Transverse colon (tissue), 4 donors: ENCODE measurements at regions of chr1 and their contacts with region 1.

Region 1: DNA sequence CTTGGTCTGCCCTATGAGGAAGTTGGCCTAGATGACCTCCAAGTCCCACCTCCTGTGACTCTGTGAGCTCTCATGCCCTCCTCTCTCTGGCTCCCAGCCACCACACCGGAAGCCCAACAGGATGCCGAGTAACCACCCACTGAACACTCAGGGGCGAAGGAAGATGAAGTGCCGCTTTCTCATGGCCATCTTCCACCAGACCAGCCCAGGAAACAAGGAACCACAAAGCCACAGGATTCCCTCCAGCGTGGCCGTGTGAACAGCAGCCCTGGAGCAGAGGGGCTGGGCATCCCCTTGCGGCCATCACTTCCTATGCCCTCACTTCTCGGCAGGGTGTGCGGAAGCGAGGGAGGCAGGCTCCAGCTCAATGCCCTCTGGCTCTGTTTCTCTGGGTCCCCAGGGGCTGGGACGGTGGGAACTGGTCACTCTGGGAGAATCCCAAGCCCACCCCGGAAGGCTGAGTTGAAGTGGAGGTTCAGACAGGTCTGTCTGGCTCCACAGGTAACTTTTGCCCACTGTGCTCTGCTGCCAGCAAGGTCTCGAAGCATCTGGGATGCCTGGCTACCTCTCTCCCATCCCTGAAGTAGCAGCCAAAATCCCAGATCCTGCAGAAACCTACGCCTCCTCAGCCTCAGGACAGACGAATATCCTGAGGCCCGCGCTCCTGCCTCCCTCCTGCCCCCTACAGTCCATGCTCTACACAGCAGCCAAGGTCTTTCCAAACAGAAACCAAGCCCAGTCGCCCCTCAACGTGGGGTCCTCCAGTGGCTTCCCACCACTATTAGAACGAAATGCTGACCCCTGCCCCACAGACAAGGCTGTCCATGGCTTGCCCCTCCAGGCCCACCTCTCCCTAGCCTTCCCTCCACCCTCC is 44.2 kb upstream of the ECE1 start:
- DNase-seq: peak; percentile 83
- H3K4me3 ChIP-seq: peak overlapping the region in 1 of 4 donors; percentile 28
- H3K27ac ChIP-seq: peak overlapping the region; percentile 85 to 98 (median 91)
- H3K4me1 ChIP-seq: peaks cover 78 to 97% (median 94%) of the 10 kb centered on the region in 4 donors
- H3K27me3 ChIP-seq: no peaks in the 10 kb centered on the region
- CTCF ChIP-seq: peak; percentile 73 to 81 (median 74)
- EP300 ChIP-seq: no peak
- POLR2A ChIP-seq: no peak

Region 2: GRCh38 chr1:20521960-20522861 is 812.2 kb before region 1 on chr1:
- in situ Hi-C with region 1: no loop called
- intact Hi-C with region 1: no loop called
- DNase-seq: peak; percentile 86
- H3K4me3 ChIP-seq: peak overlapping the region in 1 of 4 donors; percentile 18
- H3K27ac ChIP-seq: no peak overlapping the region
- H3K4me1 ChIP-seq: peaks cover 0 to 6% (median 0%) of the 10 kb centered on the region in 4 donors
- H3K27me3 ChIP-seq: peaks cover 5% of the 10 kb centered on the region
- CTCF ChIP-seq: peak; percentile 83 to 96 (median 88)
- EP300 ChIP-seq: no peak
- POLR2A ChIP-seq: no peak

Region 3: GRCh38 chr1:21268281-21269239 is 65.9 kb before region 1 on chr1:
- in situ Hi-C with region 1: no loop called
- intact Hi-C with region 1: loop called (anchors 2 kb)
- DNase-seq: peak; percentile 60
- H3K4me3 ChIP-seq: no peak overlapping the region
- H3K27ac ChIP-seq: no peak overlapping the region
- H3K4me1 ChIP-seq: peaks cover 0 to 4% (median 0%) of the 10 kb centered on the region in 4 donors
- H3K27me3 ChIP-seq: no peaks in the 10 kb centered on the region
- CTCF ChIP-seq: no peak
- EP300 ChIP-seq: no peak
- POLR2A ChIP-seq: no peak